ENCODE measurements at regions of chr3 and their contacts with region 1.

Region 1: GRCh38 chr3:1082108-1082507 is 10.7 kb upstream of the CNTN6 start:
- ATAC-seq: peak; percentile 62 to 96 (median 68)
- H3K4me3 ChIP-seq: no peak overlapping the region
- H3K27ac ChIP-seq: no peak overlapping the region
- H3K4me1 ChIP-seq: peaks cover 5 to 11% of the 10 kb centered on the region in 2 donors

Region 2: DNA sequence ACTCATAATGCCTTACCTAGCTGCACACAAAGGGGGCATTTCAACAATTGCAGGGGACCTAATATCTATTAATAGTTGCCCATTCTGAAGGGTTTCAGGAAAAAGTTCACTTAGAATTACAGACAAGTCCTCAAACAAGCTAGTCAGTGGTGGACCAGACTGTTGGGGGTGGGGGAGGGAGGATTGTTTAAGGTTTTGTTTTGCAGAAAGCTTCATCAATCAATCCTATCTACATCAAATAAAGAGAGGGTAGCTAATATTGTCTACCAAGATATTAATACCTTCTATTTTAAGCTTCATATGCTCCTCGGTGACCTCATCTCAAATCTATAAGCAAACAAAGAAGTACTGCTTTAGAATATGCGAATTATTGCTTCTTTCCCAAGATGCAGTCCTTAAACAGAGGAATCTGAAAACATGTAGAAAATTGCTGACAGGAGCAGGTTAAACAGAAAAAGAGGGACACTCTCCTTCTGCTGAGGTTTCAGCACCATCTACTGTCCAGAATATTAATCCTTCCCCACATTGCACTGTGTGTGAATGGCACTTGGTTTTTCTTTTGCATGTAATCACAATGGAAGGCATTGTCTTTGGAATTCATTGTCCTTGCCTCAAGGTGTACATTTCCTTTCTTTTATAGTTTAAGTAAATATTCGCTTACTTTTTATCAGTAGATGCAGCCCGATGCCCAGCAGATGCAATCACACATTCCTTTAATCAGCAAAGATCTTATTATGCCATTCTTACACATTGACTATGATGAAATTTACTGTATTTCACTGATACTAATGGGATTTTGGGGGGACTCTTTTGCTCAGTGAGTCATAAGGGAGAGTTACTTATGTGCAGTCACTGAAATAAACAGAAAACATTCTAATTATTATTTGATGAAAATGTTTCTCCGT is 1933.3 kb after region 1 on chr3:
- in situ Hi-C with region 1: loop called in 1 of 9 experiments (anchors 25 kb)
- ATAC-seq: peak; percentile 58 to 98 (median 97)
- H3K4me3 ChIP-seq: no peak overlapping the region
- H3K27ac ChIP-seq: no peak overlapping the region
- H3K4me1 ChIP-seq: peaks cover 6 to 15% of the 10 kb centered on the region in 2 donors